Aorta (tissue), 5 donors: ENCODE measurements at regions of chr10 and their contacts with region 1.

Region 1: GRCh38 chr10:91551856-91552255 is 81.0 kb downstream of the PPP1R3C start:
- DNase-seq: no peak
- ATAC-seq: peak; percentile 83
- H3K4me3 ChIP-seq: no peak overlapping the region
- H3K27ac ChIP-seq: no peak overlapping the region
- H3K4me1 ChIP-seq: no peaks in the 10 kb centered on the region
- H3K27me3 ChIP-seq: no peaks in the 10 kb centered on the region

Region 2: DNA sequence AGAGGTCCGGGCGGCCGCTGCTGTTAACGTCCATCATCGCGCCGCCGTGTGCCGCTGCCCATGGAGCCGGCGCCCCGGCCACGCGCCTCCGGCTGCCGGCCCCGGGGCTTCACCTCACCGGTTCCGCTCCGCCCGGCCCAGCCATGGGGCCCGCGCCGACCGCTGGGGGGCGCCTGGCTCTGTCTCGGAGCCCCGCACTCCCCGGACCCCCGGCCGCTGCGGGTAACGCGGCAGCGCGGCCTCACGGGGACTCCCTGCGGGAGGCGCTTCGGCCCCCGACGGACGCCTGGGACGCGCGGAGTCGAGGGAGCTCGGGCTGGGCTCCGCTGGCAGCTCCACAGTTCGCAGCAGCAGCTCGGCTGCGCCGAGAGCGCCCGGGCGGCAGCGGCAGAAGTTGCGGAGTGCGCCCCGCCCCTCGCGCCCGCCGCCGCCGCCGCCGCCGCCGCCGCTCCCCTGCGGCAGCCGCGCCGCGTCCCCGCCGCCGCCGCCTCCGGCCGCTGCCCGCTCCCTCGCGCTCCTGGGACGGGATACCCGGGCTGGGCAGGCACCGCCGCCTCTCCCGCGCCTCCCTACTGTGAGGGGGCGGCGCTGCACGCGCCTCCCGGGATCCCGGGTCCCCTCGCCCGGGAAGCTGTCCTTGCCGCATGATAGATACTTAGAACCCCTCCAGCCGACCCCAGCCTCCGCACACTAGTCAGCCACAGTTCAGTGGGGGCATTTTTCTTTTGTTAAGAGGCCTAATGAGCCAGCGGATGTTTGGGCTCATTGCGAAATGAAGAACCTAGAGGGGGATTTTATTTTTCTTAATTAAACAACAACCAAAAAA is 694.0 kb before region 1 on chr10 and contains the start of gene HTR7:
- intact Hi-C with region 1: no loop called
- DNase-seq: peak; percentile 73 to 89
- ATAC-seq: peak; percentile 86
- H3K4me3 ChIP-seq: peak within 1 kb of the TSS; percentile 85 to 88
- H3K27ac ChIP-seq: peak within 1 kb of the TSS in 1 of 2 donors; percentile 34
- H3K4me1 ChIP-seq: no peaks in the 10 kb centered on the region
- H3K27me3 ChIP-seq: no peaks in the 10 kb centered on the region
- total RNA-seq, gene HTR7: 1.3 to 3.1 TPM

Region 3: DNA sequence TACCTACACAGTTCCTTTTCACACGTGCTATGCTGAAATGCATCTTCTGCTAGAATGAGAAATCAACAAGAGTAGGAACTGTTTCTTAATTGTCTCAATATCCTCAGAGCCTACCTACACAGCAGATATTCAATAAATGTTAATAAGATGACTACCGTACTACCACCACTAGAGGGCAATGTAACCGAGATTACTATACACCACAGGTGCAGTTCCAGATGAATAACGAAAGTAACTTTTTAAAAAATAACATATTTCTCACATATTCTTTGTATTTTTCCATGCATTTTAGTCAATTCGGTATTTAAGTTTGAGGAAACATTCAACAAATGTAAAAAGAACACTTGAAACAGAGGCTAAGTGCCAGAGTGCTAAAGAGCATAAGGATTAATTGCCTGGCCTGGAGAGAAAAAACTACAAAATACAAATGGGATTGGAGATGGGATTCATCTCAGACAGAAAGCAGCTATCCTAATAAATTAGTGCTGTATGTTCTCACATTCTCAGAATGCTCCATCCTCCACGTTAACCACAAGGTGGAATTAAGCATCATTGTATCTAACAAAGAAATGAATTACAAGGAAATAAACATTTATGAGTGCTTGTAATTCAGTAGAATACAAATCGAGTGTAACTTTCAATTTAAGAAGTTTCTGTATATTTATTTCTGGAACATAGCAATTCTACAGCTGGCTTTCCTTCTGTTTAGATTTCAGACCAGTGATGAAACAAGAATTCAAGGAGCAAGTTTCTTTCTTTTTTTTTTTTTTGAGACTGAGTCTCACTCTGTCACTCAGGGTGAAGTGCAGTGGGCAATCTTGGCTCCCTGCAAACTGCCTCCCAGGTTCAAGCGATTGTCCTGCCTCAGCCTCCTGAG is 162.0 kb before region 1 on chr10:
- intact Hi-C with region 1: loop called in 1 of 2 experiments (anchors 10 kb)
- DNase-seq: no peak
- ATAC-seq: peak; percentile 84
- H3K4me3 ChIP-seq: no peak overlapping the region
- H3K27ac ChIP-seq: no peak overlapping the region
- H3K4me1 ChIP-seq: no peaks in the 10 kb centered on the region
- H3K27me3 ChIP-seq: peaks cover 0 to 1% of the 10 kb centered on the region in 2 donors

Region 4: GRCh38 chr10:91493313-91493712 is 58.5 kb before region 1 on chr10:
- intact Hi-C with region 1: loop called in 1 of 2 experiments (anchors 10 kb)
- DNase-seq: no peak
- ATAC-seq: no peak
- H3K4me3 ChIP-seq: no peak overlapping the region
- H3K27ac ChIP-seq: no peak overlapping the region
- H3K4me1 ChIP-seq: no peaks in the 10 kb centered on the region
- H3K27me3 ChIP-seq: no peaks in the 10 kb centered on the region